ENCODE measurements at regions of chr11 and their contacts with region 1.

Region 1: GRCh38 chr11:73423506-73423905 is 47.3 kb downstream of the RELT start:
- DNase-seq: no peak
- H3K4me3 ChIP-seq: no peak overlapping the region
- H3K27ac ChIP-seq: no peak overlapping the region
- H3K4me1 ChIP-seq: no peaks in the 10 kb centered on the region
- H3K27me3 ChIP-seq: no peaks in the 10 kb centered on the region
- CTCF ChIP-seq: no peak
- POLR2A ChIP-seq: no peak

Region 2: GRCh38 chr11:73661035-73661628 is 237.6 kb after region 1 on chr11:
- intact Hi-C with region 1: loop called (anchors 5 kb)
- DNase-seq: peak; percentile 33
- H3K4me3 ChIP-seq: peak overlapping the region; percentile 5 to 59 (median 28)
- H3K27ac ChIP-seq: peak overlapping the region in 1 of 4 donors; percentile 14
- H3K4me1 ChIP-seq: peaks cover 0 to 21% (median 11%) of the 10 kb centered on the region in 3 donors
- H3K27me3 ChIP-seq: no peaks in the 10 kb centered on the region
- CTCF ChIP-seq: peak; percentile 89 to 99 (median 98)
- POLR2A ChIP-seq: no peak

Measured in esophagus squamous epithelium (tissue), 5 donors.